HEK293 (cell line): ENCODE measurements at regions of chr17 and their contacts with region 1.

Region 1: GRCh38 chr17:73255671-73256181 is 6.0 kb downstream of the CPSF4L start:
- H3K4me3 ChIP-seq: no peak overlapping the region
- H3K27ac ChIP-seq: no peak overlapping the region
- H3K4me1 ChIP-seq: no peaks in the 10 kb centered on the region
- CTCF ChIP-seq: peak; percentile 90

Region 2: DNA sequence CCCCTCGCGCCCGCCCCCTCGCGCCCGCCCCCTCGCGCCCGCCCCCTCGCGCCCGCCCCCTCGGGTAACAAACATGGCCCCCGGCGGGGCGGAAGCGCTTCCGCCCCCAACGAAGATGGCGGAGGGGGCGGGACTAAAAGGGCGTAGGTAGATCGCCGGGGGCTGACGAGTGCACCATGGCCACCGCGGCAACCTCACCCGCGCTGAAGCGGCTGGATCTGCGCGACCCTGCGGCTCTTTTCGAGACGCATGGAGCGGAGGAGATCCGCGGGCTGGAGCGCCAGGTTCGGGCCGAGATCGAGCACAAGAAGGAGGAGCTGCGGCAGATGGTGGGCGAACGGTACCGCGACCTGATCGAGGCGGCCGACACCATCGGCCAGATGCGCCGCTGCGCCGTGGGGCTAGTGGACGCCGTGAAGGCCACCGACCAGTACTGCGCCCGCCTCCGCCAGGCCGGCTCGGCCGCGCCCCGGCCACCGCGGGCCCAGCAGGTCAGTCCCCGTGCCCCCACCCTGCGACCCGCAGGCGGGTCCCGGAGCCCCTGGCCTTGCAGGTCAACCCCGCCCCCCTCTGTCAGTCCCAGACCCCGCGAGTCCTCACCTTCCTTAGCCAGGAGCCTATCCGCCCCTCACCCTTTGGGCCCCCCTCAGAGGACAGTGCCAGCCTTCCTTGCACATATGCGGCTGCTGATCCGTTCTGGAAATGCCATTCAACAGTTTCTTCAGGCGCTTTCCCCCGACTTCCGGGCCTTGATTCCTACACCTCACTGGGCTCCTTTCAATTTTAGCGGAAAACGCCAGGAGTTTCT is 62.6 kb before region 1 on chr17 and contains the start of gene COG1:
- CTCF ChIA-PET with region 1: interaction called, 17 read pairs
- POLR2A ChIA-PET with region 1: no interaction called
- H3K4me3 ChIP-seq: peak within 1 kb of the TSS; percentile 93
- H3K27ac ChIP-seq: peak within 1 kb of the TSS; percentile 98
- H3K4me1 ChIP-seq: peaks cover 3% of the 10 kb centered on the region; the same call in 1 of the 2 replicates
- CTCF ChIP-seq: peak; percentile 73; the same call in 1 of the 2 replicates

Region 3: DNA sequence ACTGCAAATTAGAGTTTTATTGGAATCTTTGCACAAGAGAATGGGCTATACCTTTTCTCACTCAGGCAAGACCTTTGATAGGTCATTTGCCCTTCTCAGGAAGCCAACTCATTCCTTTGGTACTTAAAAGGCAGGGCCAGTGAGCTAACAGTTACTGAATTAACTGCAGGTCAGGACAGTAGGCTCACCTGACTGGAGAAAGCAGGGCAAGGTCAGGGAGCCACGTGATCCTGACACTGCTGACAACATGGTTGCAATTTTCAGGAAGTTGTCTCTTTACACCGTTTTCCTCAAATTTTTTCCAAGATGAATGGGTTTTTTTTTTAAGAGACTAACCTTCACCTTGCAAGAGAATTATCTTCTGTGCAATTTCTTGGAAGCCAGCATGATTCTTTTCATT is 15.2 kb before region 1 on chr17:
- CTCF ChIA-PET with region 1: interaction called, 41 read pairs
- POLR2A ChIA-PET with region 1: no interaction called
- H3K4me3 ChIP-seq: no peak overlapping the region
- H3K27ac ChIP-seq: no peak overlapping the region
- H3K4me1 ChIP-seq: no peaks in the 10 kb centered on the region
- CTCF ChIP-seq: no peak

Region 4: GRCh38 chr17:73267648-73268537 is 12.2 kb after region 1 on chr17:
- CTCF ChIA-PET with region 1: interaction called, 10 read pairs
- POLR2A ChIA-PET with region 1: no interaction called
- H3K4me3 ChIP-seq: no peak overlapping the region
- H3K27ac ChIP-seq: no peak overlapping the region
- H3K4me1 ChIP-seq: no peaks in the 10 kb centered on the region
- CTCF ChIP-seq: no peak

Region 5: GRCh38 chr17:73278465-73279453 is 23.0 kb after region 1 on chr17:
- CTCF ChIA-PET with region 1: interaction called, 19 read pairs
- POLR2A ChIA-PET with region 1: no interaction called
- H3K4me3 ChIP-seq: no peak overlapping the region
- H3K27ac ChIP-seq: peak overlapping the region; percentile 62
- H3K4me1 ChIP-seq: peaks cover 16% of the 10 kb centered on the region
- CTCF ChIP-seq: no peak

Region 6: GRCh38 chr17:73311781-73312641 is 56.3 kb after region 1 on chr17 and contains the start of gene CDC42EP4:
- CTCF ChIA-PET with region 1: interaction called, 50 read pairs
- POLR2A ChIA-PET with region 1: interaction called, 4 read pairs
- H3K4me3 ChIP-seq: peak within 1 kb of the TSS; percentile 86
- H3K27ac ChIP-seq: peak within 1 kb of the TSS; percentile 88
- H3K4me1 ChIP-seq: peaks cover 19% of the 10 kb centered on the region
- CTCF ChIP-seq: no peak

Region 7: DNA sequence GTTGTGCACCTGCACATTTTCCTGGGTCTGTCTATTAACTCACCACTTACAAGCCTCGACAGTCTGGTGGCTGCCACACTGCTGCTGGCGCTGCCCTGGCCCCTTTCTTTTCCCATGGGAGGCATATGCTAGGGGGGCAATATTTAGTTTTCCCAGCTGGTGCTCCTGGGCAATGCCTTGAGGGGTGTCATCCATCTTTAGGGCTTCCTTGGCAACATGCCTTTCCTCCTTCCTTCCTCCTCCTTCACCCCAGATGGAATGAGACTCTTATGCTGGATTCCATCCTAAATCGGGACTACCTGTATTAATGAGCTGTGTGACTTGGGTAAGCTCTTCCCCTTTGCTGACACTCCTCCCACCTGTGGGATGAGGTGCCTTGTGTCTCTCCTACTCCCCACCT is 120.9 kb after region 1 on chr17:
- CTCF ChIA-PET with region 1: interaction called, 315 read pairs
- POLR2A ChIA-PET with region 1: no interaction called
- H3K4me3 ChIP-seq: no peak overlapping the region
- H3K27ac ChIP-seq: no peak overlapping the region
- H3K4me1 ChIP-seq: no peaks in the 10 kb centered on the region
- CTCF ChIP-seq: no peak